PC-9 (cell line): ENCODE measurements at regions of chr17 and their contacts with region 1.

Region 1: GRCh38 chr17:43483674-43484372 is at the start of gene DHX8:
- DNase-seq: peak; percentile 96 to 97
- H3K4me3 ChIP-seq: peak within 1 kb of the TSS; percentile 87
- H3K27ac ChIP-seq: peak within 1 kb of the TSS; percentile 56
- H3K4me1 ChIP-seq: peaks cover 19% of the 10 kb centered on the region
- H3K27me3 ChIP-seq: no peaks in the 10 kb centered on the region
- CTCF ChIP-seq: peak; percentile 100
- total RNA-seq, gene DHX8: 42.4 and 55.4 TPM in 2 replicates

Region 2: GRCh38 chr17:42276359-42276608 is 1207.5 kb before region 1 on chr17 and contains the start of gene STAT5B:
- CTCF ChIA-PET with region 1: no interaction called
- POLR2A ChIA-PET with region 1: no interaction called
- intact Hi-C with region 1: no loop called
- DNase-seq: peak in 1 of 2 experiments; percentile 61
- H3K4me3 ChIP-seq: peak within 1 kb of the TSS; percentile 83
- H3K27ac ChIP-seq: peak within 1 kb of the TSS; percentile 66
- H3K4me1 ChIP-seq: peaks cover 24% of the 10 kb centered on the region
- H3K27me3 ChIP-seq: no peaks in the 10 kb centered on the region
- CTCF ChIP-seq: no peak
- total RNA-seq, gene STAT5B: 19.5 and 21.1 TPM in 2 replicates

Region 3: GRCh38 chr17:42832974-42833766 is 650.7 kb before region 1 on chr17 and contains the start of gene PSME3:
- CTCF ChIA-PET with region 1: no interaction called
- POLR2A ChIA-PET with region 1: no interaction called
- intact Hi-C with region 1: loop called (anchors 5 kb)
- DNase-seq: peak; percentile 80
- H3K4me3 ChIP-seq: peak within 1 kb of the TSS; percentile 93
- H3K27ac ChIP-seq: peak within 1 kb of the TSS; percentile 77
- H3K4me1 ChIP-seq: peaks cover 16% of the 10 kb centered on the region
- H3K27me3 ChIP-seq: no peaks in the 10 kb centered on the region
- CTCF ChIP-seq: no peak
- total RNA-seq, gene PSME3: 115 and 122 TPM in 2 replicates

Region 4: GRCh38 chr17:43388359-43389045 is 95.3 kb before region 1 on chr17:
- CTCF ChIA-PET with region 1: interaction called, 23 read pairs
- POLR2A ChIA-PET with region 1: interaction called, 8 read pairs
- intact Hi-C with region 1: loop called (anchors 1 kb)
- DNase-seq: peak; percentile 84 to 91
- H3K4me3 ChIP-seq: peak overlapping the region; percentile 94
- H3K27ac ChIP-seq: peak overlapping the region; percentile 91
- H3K4me1 ChIP-seq: peaks cover 17% of the 10 kb centered on the region
- H3K27me3 ChIP-seq: no peaks in the 10 kb centered on the region
- CTCF ChIP-seq: no peak

Region 5: DNA sequence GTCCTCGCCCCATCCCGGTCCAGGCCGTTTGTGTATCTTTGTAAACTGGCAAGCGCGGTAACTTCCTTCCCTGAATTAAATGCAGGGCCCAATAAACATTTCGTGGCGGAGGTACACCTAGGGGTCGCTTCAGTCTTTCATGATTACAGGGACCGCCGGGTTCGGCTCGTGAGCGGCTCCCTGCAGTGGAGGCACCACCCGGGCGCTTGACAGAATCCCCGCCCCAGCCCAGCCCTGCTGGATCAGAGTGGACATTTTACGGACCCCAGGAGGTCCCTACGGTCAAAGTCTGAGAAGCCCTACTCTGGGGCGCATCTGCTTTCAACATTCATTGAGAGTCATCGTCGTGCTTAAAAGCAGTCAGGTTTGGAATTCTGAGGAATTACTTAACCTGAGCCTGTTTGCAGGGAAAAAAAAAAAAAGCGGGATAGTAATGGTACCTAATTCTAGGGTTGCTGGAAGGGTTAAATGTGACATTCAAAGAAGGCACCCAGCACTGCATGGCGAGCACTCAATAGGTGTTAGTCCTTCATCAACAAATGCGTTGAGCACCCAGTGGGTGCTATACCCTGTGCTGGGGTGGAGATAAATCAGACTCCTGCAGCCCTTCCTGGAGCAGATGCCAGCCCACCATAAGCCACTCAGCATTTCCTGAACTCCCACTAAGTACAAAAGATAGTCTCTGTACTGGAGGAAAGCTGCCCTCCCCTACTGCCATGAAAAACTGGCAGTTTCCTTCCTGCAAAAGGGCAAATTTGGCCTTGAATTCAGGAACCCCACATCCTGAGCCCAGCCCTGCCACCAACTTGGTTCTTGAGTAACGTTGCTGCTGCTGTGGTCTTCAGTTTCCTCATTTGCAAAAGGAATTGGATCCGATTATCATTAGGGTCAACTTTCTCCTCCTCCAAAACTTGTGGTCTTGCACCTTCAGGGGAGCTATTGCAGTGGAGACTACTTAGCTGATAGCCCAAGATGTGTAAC is 295.6 kb after region 1 on chr17:
- CTCF ChIA-PET with region 1: no interaction called
- POLR2A ChIA-PET with region 1: no interaction called
- intact Hi-C with region 1: no loop called
- DNase-seq: no peak
- H3K4me3 ChIP-seq: peak overlapping the region; percentile 81
- H3K27ac ChIP-seq: no peak overlapping the region
- H3K4me1 ChIP-seq: peaks cover 14% of the 10 kb centered on the region
- H3K27me3 ChIP-seq: peaks cover 20% of the 10 kb centered on the region; the same call in 1 of the 2 replicates
- CTCF ChIP-seq: peak; percentile 40; the same call in 1 of the 2 replicates